CD4-positive, alpha-beta T cell (primary cell): ENCODE measurements at regions of chr9 and their contacts with region 1.

Region 1: DNA sequence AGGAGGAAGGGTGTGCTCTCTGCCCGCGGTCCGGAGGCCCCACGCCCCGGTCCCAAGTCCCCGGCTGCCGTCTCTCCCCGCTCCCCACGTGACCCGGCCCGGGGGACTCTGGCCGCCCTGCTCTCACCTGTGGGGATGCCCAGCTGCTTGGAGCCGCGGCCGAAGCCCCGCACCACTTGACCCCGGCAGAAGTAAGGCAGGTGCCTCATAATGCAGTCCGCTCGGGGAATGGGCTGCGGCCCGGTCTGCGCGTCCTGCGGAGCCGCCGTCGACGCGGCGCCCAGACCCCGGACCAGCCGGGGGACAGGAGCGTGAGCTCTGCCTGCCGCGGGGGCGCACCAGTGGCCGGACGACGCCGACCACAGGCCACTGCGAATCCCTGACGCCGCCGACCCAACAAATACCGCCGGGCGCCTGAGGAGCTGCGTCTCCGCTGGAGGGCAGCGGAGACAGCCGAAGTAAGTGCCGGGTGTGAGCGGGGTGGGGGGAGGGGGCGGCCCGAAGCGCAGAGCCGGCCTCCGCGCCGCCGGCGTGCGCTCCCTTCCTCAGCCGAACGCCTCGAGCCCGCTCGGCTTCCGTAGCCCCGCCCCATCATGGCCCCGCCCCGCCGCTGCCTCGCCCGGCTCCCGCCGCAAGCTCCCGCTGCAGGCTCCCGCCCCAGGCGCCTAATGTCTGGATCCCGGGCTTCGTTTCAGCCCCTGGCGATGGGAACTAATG is at the start of gene RFK:
- DNase-seq: peak; percentile 88 to 97 (median 94)
- ATAC-seq: peak; percentile 86
- H3K4me3 ChIP-seq: peak within 1 kb of the TSS; percentile 93
- H3K4me3 Mint-ChIP-seq: peak within 1 kb of the TSS; percentile 92
- H3K27ac ChIP-seq: peak within 1 kb of the TSS; percentile 78 to 80
- H3K27ac Mint-ChIP-seq: peak within 1 kb of the TSS; percentile 96
- H3K4me1 ChIP-seq: peaks cover 25% of the 10 kb centered on the region
- H3K4me1 Mint-ChIP-seq: peaks cover 40% of the 10 kb centered on the region
- H3K27me3 ChIP-seq: no peaks in the 10 kb centered on the region
- H3K27me3 Mint-ChIP-seq: no peaks in the 10 kb centered on the region
- CTCF ChIP-seq: peak; percentile 39
- total RNA-seq, gene RFK: 7.4 to 8.4 TPM

Region 2: GRCh38 chr9:75027187-75028107 is 1366.7 kb before region 1 on chr9:
- CTCF ChIA-PET with region 1: no interaction called
- POLR2A ChIA-PET with region 1: interaction called, 8 read pairs
- intact Hi-C with region 1: loop called in 1 of 2 experiments (anchors 5 kb)
- DNase-seq: peak; percentile 2 to 71 (median 27)
- ATAC-seq: peak; percentile 4
- H3K4me3 ChIP-seq: peak overlapping the region; percentile 86
- H3K4me3 Mint-ChIP-seq: peak overlapping the region; percentile 98
- H3K27ac ChIP-seq: peak overlapping the region; percentile 70 to 85
- H3K27ac Mint-ChIP-seq: peak overlapping the region; percentile 92
- H3K4me1 ChIP-seq: peaks cover 24% of the 10 kb centered on the region
- H3K4me1 Mint-ChIP-seq: peaks cover 56% of the 10 kb centered on the region
- H3K27me3 ChIP-seq: no peaks in the 10 kb centered on the region
- H3K27me3 Mint-ChIP-seq: no peaks in the 10 kb centered on the region
- CTCF ChIP-seq: peak; percentile 30

Region 3: GRCh38 chr9:75200892-75201470 is 1193.1 kb before region 1 on chr9:
- CTCF ChIA-PET with region 1: no interaction called
- POLR2A ChIA-PET with region 1: no interaction called
- intact Hi-C with region 1: loop called in 1 of 2 experiments (anchors 10 kb)
- DNase-seq: peak in 3 of 14 experiments; percentile 59 to 66 (median 64)
- ATAC-seq: no peak
- H3K4me3 ChIP-seq: no peak overlapping the region
- H3K4me3 Mint-ChIP-seq: no peak overlapping the region
- H3K27ac ChIP-seq: no peak overlapping the region
- H3K27ac Mint-ChIP-seq: no peak overlapping the region
- H3K4me1 ChIP-seq: no peaks in the 10 kb centered on the region
- H3K4me1 Mint-ChIP-seq: no peaks in the 10 kb centered on the region
- H3K27me3 ChIP-seq: no peaks in the 10 kb centered on the region
- H3K27me3 Mint-ChIP-seq: no peaks in the 10 kb centered on the region
- CTCF ChIP-seq: peak; percentile 73

Region 4: DNA sequence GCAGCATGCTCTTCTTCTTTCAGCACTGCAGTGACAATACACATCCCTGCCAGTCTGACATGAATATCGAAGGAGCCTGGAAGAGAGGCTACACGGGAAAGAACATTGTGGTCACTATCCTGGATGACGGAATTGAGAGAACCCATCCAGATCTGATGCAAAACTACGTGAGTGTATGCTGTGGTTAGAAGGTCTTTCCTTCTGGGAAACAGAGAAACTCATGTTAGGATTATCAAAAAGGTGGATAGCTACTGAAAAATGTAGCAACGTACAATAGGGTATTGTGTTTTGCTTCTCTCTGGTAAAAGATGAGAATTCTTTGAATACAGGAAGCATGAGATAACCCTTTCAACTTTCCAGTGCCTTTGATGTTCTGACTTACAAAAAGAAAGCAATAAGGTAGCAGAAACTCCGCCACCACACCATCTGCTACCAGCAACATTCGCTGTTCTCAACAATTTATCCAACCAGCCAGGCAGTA is 370.4 kb before region 1 on chr9:
- CTCF ChIA-PET with region 1: no interaction called
- POLR2A ChIA-PET with region 1: interaction called, 3 read pairs
- intact Hi-C with region 1: loop called (anchors 2 to 10 kb)
- DNase-seq: peak; percentile 11 to 86 (median 40)
- ATAC-seq: peak; percentile 90
- H3K4me3 ChIP-seq: peak overlapping the region; percentile 39
- H3K4me3 Mint-ChIP-seq: peak overlapping the region; percentile 79
- H3K27ac ChIP-seq: peak overlapping the region; percentile 51 to 64
- H3K27ac Mint-ChIP-seq: peak overlapping the region; percentile 93
- H3K4me1 ChIP-seq: peaks cover 56% of the 10 kb centered on the region
- H3K4me1 Mint-ChIP-seq: peaks cover 100% of the 10 kb centered on the region
- H3K27me3 ChIP-seq: no peaks in the 10 kb centered on the region
- H3K27me3 Mint-ChIP-seq: no peaks in the 10 kb centered on the region
- CTCF ChIP-seq: no peak

Region 5: DNA sequence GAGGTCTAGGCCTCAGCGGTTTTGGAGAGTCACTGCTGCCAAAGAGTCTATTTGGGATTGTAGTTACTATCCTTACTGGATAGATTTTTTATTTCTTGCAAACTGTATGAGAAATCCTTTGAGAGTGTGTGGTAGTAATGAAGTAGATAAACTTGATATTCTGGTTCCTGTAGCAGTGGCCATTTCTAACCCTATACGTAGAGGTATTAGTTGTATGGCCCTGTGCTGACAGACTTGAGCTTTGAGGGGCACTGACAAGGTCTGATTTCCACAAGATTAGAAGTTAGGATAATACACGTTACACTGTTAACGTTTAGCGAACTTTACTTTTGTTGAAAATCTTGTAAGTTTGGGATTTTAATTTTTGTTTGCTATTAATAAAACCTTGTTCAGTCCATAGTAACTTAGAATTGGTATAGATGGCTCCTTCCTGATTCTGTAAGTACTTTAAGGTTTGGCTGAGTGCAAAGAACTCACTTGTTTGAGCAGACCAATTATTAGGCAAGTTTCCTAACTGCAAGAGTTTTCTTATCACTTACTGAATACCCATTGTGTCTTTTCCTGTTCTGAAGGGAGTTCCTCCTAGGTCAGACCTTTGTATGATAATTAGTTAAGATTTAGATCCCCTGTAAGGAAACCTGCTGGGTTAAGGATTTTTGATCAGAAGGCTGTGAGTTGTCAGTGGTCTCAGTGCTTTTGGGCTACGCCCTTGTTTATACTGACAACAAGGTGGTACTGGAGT is 96.3 kb after region 1 on chr9:
- CTCF ChIA-PET with region 1: no interaction called
- POLR2A ChIA-PET with region 1: no interaction called
- intact Hi-C with region 1: no loop called
- DNase-seq: no peak
- ATAC-seq: no peak
- H3K4me3 ChIP-seq: no peak overlapping the region
- H3K4me3 Mint-ChIP-seq: no peak overlapping the region
- H3K27ac ChIP-seq: no peak overlapping the region
- H3K27ac Mint-ChIP-seq: no peak overlapping the region
- H3K4me1 ChIP-seq: peaks cover 7% of the 10 kb centered on the region
- H3K4me1 Mint-ChIP-seq: peaks cover 5% of the 10 kb centered on the region
- H3K27me3 ChIP-seq: no peaks in the 10 kb centered on the region
- H3K27me3 Mint-ChIP-seq: no peaks in the 10 kb centered on the region
- CTCF ChIP-seq: no peak

Region 6: GRCh38 chr9:76651119-76651705 is 257.1 kb after region 1 on chr9:
- CTCF ChIA-PET with region 1: no interaction called
- POLR2A ChIA-PET with region 1: interaction called, 10 read pairs
- intact Hi-C with region 1: no loop called
- DNase-seq: peak in 2 of 14 experiments; percentile 19 to 55
- ATAC-seq: no peak
- H3K4me3 ChIP-seq: peak overlapping the region; percentile 53
- H3K4me3 Mint-ChIP-seq: peak overlapping the region; percentile 84
- H3K27ac ChIP-seq: no peak overlapping the region
- H3K27ac Mint-ChIP-seq: no peak overlapping the region
- H3K4me1 ChIP-seq: peaks cover 4% of the 10 kb centered on the region
- H3K4me1 Mint-ChIP-seq: peaks cover 32% of the 10 kb centered on the region
- H3K27me3 ChIP-seq: no peaks in the 10 kb centered on the region
- H3K27me3 Mint-ChIP-seq: no peaks in the 10 kb centered on the region
- CTCF ChIP-seq: no peak

Region 7: GRCh38 chr9:77163884-77164283 is 769.8 kb after region 1 on chr9:
- CTCF ChIA-PET with region 1: no interaction called
- POLR2A ChIA-PET with region 1: no interaction called
- intact Hi-C with region 1: loop called in 1 of 2 experiments (anchors 10 kb)
- DNase-seq: no peak
- ATAC-seq: no peak
- H3K4me3 ChIP-seq: no peak overlapping the region
- H3K4me3 Mint-ChIP-seq: no peak overlapping the region
- H3K27ac ChIP-seq: no peak overlapping the region
- H3K27ac Mint-ChIP-seq: no peak overlapping the region
- H3K4me1 ChIP-seq: no peaks in the 10 kb centered on the region
- H3K4me1 Mint-ChIP-seq: no peaks in the 10 kb centered on the region
- H3K27me3 ChIP-seq: peaks cover 0 to 4% of the 10 kb centered on the region in 2 experiments
- H3K27me3 Mint-ChIP-seq: peaks cover 14% of the 10 kb centered on the region
- CTCF ChIP-seq: no peak